ENCODE measurements at regions of chr20 and their contacts with region 1.

Region 1: DNA sequence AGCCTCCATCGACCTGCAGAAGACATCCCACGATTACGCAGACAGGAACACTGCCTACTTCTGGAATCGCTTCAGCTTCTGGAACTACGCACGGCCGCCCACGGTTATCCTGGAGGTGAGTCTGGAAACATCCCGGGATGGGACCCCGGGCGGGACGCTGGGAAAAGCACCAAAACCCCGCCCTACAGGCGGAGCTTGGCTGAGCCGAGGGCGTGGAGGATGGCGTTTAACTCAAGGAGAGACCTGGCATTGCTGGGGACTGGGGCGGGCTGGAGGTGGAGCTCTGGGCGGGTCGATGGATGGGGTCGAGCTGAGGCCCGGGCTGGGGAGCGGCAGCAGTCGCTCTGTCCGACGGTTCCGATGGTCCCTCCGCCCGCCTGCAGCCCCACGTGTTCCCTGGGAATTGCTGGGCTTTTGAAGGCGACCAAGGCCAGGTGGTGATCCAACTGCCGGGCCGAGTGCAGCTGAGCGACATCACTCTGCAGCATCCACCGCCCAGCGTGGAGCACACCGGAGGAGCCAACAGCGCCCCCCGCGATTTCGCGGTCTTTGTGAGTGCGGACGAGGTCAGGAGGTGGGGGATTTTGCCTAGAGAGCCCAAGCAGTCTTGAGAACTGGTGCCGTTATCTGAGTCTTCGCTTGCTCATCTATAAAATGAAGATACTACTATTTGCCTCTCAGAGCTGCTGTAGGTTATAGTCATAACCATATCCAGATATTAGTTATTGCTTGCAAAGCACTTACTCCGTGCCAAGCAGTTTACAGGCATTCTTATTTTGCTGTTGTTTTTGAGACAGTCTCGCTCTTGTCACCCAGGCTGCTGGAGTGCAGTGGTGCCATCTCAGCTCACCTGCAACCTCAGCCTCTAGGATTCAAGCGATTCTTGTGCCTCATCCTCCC is 3.8 kb downstream of the SPAG4 start:
- DNase-seq: peak; percentile 71 to 81 (median 76)
- H3K4me3 ChIP-seq: peak overlapping the region; percentile 36 to 75
- H3K4me3 Mint-ChIP-seq: peak overlapping the region; percentile 84 to 97 (median 90)
- H3K27ac ChIP-seq: peak overlapping the region; percentile 40
- H3K27ac Mint-ChIP-seq: peak overlapping the region; percentile 83 to 99 (median 89)
- H3K4me1 ChIP-seq: peaks cover 39% of the 10 kb centered on the region
- H3K4me1 Mint-ChIP-seq: peaks cover 17 to 47% (median 33%) of the 10 kb centered on the region in 4 donors
- H3K27me3 ChIP-seq: no peaks in the 10 kb centered on the region
- H3K27me3 Mint-ChIP-seq: peaks cover 0 to 3% of the 10 kb centered on the region in 2 donors

Region 2: DNA sequence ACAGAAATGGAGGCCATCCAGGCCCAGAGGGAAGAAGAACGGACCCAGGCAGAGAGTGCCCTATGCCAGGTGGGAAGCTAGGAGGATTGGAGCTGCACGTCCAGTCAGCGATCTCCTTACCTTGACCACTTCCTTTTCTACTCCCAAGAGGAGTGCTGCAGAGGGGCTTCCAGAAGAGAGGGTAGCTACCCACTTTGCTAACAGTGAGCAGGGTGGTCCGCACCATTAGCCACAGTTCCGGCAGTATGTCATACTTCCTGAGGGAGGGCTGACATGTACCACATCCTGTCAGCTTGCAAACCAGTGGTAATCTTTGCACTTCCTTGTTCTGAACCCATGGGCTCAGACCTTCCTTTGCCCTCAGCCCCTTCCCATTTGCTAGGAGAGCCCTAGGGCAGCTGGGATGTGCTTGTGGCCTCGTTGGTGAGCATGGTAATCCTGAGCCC is 128.7 kb before region 1 on chr20:
- CTCF ChIA-PET with region 1: interaction called, 3 read pairs
- POLR2A ChIA-PET with region 1: interaction called, 16 read pairs
- intact Hi-C with region 1: loop called (anchors 1 kb)
- DNase-seq: peak; percentile 70 to 84 (median 74)
- H3K4me3 ChIP-seq: peak overlapping the region; percentile 48 to 97
- H3K4me3 Mint-ChIP-seq: peak overlapping the region; percentile 95 to 99 (median 99)
- H3K27ac ChIP-seq: peak overlapping the region; percentile 87
- H3K27ac Mint-ChIP-seq: peak overlapping the region; percentile 94 to 100 (median 98)
- H3K4me1 ChIP-seq: peaks cover 55% of the 10 kb centered on the region
- H3K4me1 Mint-ChIP-seq: peaks cover 38 to 81% (median 56%) of the 10 kb centered on the region in 4 donors
- H3K27me3 ChIP-seq: no peaks in the 10 kb centered on the region
- H3K27me3 Mint-ChIP-seq: no peaks in the 10 kb centered on the region

Region 3: DNA sequence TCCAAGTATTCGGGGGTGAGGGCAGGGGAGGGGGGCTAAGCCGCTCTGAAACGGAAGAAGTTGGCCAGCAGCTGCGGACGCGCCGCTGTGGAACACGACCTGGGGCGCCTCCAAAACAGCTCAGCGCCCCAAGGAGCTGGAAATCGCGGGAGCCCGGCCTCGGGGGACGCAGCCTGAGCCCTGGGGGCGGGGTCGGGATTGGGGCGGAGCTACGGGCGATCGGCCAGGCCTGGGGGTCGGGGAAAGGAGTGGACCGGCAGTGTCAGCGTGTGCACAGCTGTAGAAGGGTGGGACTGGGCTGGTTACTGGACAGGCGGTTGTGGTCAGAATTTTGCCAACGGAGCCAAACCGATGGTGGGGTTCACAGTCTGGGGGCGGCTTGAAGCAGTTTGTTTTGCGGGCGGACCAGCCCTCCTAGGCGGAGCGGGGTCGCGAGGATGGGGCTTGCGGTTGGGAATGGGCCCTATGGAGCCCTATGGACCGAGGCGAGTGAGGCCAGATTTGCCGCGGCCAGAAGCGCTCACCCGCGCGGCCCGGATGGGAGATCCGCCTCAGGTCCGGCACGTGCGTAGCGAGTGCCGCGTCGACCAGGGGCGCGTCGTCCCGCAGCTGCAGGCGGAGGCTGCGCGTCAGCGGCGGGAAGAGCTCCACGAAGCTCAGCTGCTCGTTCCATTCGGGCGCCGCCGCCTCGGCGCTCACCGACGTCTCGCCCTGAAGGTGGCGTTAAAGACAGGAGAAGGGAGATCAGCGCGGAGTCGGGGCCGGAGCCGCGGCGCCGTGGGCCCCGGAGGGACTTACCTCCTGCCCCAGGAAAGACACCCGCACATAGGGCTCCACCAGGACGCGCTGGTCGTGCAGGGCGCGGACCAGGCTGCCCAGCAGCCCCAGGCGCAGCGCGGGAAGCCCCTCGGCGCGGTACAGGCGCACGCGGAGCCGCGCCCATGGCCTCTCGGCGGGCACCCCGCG is 18.2 kb before region 1 on chr20:
- CTCF ChIA-PET with region 1: interaction called, 33 read pairs
- POLR2A ChIA-PET with region 1: interaction called, 55 read pairs
- intact Hi-C with region 1: loop called (anchors 1 kb)
- DNase-seq: peak; percentile 78 to 83 (median 79)
- H3K4me3 ChIP-seq: peak overlapping the region; percentile 29 to 50
- H3K4me3 Mint-ChIP-seq: peak overlapping the region; percentile 77 to 85 (median 80)
- H3K27ac ChIP-seq: no peak overlapping the region
- H3K27ac Mint-ChIP-seq: peak overlapping the region in 6 of 7 donors; percentile 22 to 81 (median 52)
- H3K4me1 ChIP-seq: peaks cover 17% of the 10 kb centered on the region
- H3K4me1 Mint-ChIP-seq: peaks cover 2 to 15% (median 4%) of the 10 kb centered on the region in 4 donors
- H3K27me3 ChIP-seq: no peaks in the 10 kb centered on the region
- H3K27me3 Mint-ChIP-seq: peaks cover 2 to 6% of the 10 kb centered on the region in 2 donors

Region 4: GRCh38 chr20:35664544-35665221 is 45.2 kb after region 1 on chr20 and contains the starts of genes CPNE1 and RBM12:
- CTCF ChIA-PET with region 1: interaction called, 22 read pairs
- POLR2A ChIA-PET with region 1: interaction called, 97 read pairs
- intact Hi-C with region 1: loop called (anchors 1 kb)
- DNase-seq: peak; percentile 94 to 95 (median 95)
- H3K4me3 ChIP-seq: peak within 1 kb of the TSS; percentile 98 to 99
- H3K4me3 Mint-ChIP-seq: peak within 1 kb of the TSS; percentile 88 to 98 (median 97)
- H3K27ac ChIP-seq: peak within 1 kb of the TSS; percentile 99
- H3K27ac Mint-ChIP-seq: peak within 1 kb of the TSS; percentile 95 to 100 (median 99)
- H3K4me1 ChIP-seq: peaks cover 49% of the 10 kb centered on the region
- H3K4me1 Mint-ChIP-seq: peaks cover 0 to 51% (median 36%) of the 10 kb centered on the region in 4 donors
- H3K27me3 ChIP-seq: no peaks in the 10 kb centered on the region
- H3K27me3 Mint-ChIP-seq: no peaks in the 10 kb centered on the region
- total RNA-seq, gene CPNE1: 316 to 353 TPM
- total RNA-seq, gene RBM12: 129 to 138 TPM

Region 5: GRCh38 chr20:35771689-35772562 is 152.5 kb after region 1 on chr20 and contains the start of gene PHF20:
- CTCF ChIA-PET with region 1: no interaction called
- POLR2A ChIA-PET with region 1: interaction called, 7 read pairs
- intact Hi-C with region 1: loop called (anchors 2 kb)
- DNase-seq: peak; percentile 99 to 100 (median 99)
- H3K4me3 ChIP-seq: peak within 1 kb of the TSS; percentile 49 to 79
- H3K4me3 Mint-ChIP-seq: peak within 1 kb of the TSS; percentile 87 to 93 (median 91)
- H3K27ac ChIP-seq: peak within 1 kb of the TSS; percentile 94
- H3K27ac Mint-ChIP-seq: peak within 1 kb of the TSS; percentile 96 to 100 (median 100)
- H3K4me1 ChIP-seq: peaks cover 89% of the 10 kb centered on the region
- H3K4me1 Mint-ChIP-seq: peaks cover 57 to 93% (median 72%) of the 10 kb centered on the region in 4 donors
- H3K27me3 ChIP-seq: no peaks in the 10 kb centered on the region
- H3K27me3 Mint-ChIP-seq: no peaks in the 10 kb centered on the region
- total RNA-seq, gene PHF20: 72.9 to 82.3 TPM

Measured in CD4-positive, alpha-beta memory T cell (primary cell).